KBM-7 (cell line): ENCODE measurements at regions of chr3 and their contacts with region 1.

Region 1: GRCh38 chr3:51637941-51638471 is 33.0 kb upstream of the TEX264 start:
- DNase-seq: peak; percentile 83

Region 2: DNA sequence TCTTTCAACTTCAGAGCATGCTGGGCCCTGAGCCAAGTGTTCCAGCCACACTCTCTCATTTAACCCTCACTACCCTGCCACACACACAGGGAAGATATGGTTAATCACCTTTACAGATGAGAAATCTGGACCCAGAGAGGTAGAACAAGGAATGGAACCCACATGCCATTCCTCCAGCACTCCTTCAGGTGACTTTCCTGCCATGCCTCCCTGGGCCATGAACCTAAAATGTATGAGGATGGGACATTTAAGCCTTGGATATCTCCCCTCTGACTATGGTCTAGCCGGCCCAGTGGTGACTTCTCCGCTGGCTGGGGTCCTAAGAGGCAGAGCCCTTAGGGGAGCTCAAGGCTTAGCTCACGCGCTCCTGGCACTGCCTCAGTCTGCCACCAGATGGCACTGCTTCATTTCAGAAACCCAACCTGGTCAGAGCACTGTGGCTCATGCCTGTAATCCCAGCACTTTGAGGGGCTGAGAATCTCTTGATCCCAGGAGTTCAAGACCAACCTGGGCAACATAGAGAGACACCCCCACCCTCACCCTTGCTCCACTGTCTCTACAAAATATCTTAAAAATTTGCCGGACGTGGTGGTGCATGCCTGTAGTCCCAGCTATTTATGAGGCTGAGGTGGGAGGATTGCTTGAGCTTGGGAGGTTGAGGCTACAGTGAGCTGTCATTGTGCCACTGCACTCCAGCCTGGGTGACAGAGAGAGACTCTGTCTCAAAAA is 136.0 kb before region 1 on chr3:
- in situ Hi-C with region 1: loop called (anchors 10 kb)
- DNase-seq: peak; percentile 88

Region 3: DNA sequence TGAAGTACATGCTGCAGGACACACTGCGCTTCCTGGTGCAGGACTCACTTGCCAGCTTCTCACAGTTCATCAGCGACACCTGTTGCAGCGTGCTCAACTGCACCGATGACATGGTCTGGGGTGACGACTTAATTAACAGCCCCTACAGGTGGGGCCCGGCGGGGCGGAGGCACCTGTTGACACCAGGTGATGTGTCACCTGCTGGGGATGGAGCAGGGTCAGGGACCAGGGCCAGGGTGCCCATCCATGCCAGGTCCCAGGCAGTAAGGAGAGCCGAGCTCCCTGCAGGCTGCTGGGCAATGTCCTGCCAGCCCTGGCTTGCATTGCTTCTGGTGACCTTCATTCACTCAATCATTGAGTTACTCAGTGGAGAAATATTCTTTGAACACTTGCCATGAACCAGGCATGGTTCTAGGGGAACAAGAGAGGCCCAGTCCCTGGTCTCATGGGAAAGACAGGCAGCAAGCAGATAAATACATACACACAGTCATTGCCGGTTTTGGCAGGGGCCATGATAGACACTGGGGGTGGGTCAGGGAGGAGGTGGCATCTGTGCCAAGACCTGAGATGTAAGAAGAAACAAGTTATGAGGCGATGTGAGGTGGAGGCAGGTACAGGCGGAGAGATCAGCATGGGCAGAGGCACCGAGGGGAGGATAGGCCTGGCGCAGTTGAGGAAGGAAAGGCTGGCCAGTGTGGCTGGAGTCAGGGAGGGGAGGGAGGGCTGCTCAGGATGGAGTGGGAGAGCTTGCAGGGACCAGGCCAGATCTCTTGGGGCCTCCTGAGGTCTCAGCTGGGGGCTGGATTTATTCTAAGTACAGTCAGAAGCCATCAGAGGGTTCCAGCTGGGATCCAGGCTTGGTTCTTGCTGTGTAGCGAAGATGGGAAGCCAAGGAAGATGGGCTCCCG is 708.9 kb after region 1 on chr3:
- in situ Hi-C with region 1: no loop called
- DNase-seq: no peak